ENCODE measurements at regions of chr19 and their contacts with region 1.

Region 1: GRCh38 chr19:7535035-7535992 is at the start of gene PNPLA6:
- DNase-seq: peak; percentile 95
- ATAC-seq: peak; percentile 86
- H3K4me3 Mint-ChIP-seq: peak within 1 kb of the TSS; percentile 95
- H3K27ac Mint-ChIP-seq: peak within 1 kb of the TSS; percentile 90
- H3K4me1 Mint-ChIP-seq: peaks cover 28% of the 10 kb centered on the region
- H3K27me3 Mint-ChIP-seq: no peaks in the 10 kb centered on the region
- total RNA-seq, gene PNPLA6: 166 to 173 TPM

Region 2: GRCh38 chr19:7506385-7507328 is 28.7 kb before region 1 on chr19:
- CTCF ChIA-PET with region 1: no interaction called
- POLR2A ChIA-PET with region 1: no interaction called
- DNase-seq: peak; percentile 64
- ATAC-seq: peak; percentile 74
- H3K4me3 Mint-ChIP-seq: no peak overlapping the region
- H3K27ac Mint-ChIP-seq: no peak overlapping the region
- H3K4me1 Mint-ChIP-seq: peaks cover 3% of the 10 kb centered on the region
- H3K27me3 Mint-ChIP-seq: peaks cover 20% of the 10 kb centered on the region

Region 3: GRCh38 chr19:7522072-7522922 is 13.0 kb before region 1 on chr19 and contains the start of gene MCOLN1:
- CTCF ChIA-PET with region 1: interaction called, 9 read pairs
- POLR2A ChIA-PET with region 1: interaction called, 19 read pairs
- DNase-seq: peak; percentile 99
- ATAC-seq: peak; percentile 91
- H3K4me3 Mint-ChIP-seq: peak within 1 kb of the TSS; percentile 70
- H3K27ac Mint-ChIP-seq: peak within 1 kb of the TSS; percentile 76
- H3K4me1 Mint-ChIP-seq: peaks cover 11% of the 10 kb centered on the region
- H3K27me3 Mint-ChIP-seq: no peaks in the 10 kb centered on the region
- total RNA-seq, gene MCOLN1: 16.2 to 17.7 TPM

Measured in activated CD8-positive, alpha-beta T cell treated with anti-CD3 and anti-CD28 coated beads, Interleukin-2, amount 10 ng/mL, durations not matched to agents 7 days and 5 days (primary cell).